CD4-positive, alpha-beta memory T cell (primary cell): ENCODE measurements at regions of chr6 and their contacts with region 1.

Region 1: DNA sequence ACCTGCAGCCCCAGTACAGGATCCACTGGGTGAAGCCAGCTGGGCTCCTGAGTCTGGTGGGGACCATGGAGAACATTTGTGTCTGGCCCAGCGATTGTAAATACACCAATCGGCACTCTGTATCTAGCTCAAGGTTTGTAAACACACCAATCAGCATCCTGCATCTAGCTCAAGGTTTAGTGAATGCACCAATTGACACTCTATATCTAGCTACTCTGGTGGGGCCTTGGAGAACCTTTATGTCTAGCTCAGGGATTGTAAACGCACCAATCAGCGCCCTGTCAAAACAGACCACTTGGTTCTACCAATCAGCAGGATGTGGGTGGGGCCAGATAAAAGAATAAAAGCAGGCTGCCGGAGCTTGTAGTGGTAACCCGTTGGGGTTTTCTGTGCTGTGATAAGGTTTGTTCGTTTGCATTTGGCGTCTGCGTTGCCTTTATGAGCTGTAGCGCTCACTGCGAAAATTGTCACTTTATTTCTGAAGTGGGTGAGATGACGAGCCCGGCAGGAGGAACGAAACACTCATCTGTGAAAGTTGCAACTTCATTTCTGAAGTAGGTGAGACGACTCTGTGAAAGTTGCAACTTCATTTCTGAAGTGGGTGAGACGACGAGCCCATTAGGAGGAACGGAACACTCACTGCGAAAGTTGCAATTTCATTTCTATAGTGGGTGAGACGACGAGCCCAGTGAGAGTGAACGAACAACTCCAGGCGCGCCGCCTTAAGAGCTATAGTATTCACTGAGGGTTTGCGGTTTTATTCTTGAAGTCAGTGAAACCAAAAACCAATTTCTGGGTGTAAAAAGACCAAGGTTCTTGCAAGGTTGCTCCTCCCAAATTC is 31.1 kb downstream of the SERPINB6 start:
- DNase-seq: peak; percentile 76 to 93 (median 80)
- H3K4me3 ChIP-seq: peak overlapping the region; percentile 58 to 59
- H3K4me3 Mint-ChIP-seq: peak overlapping the region; percentile 79 to 95 (median 90)
- H3K27ac ChIP-seq: peak overlapping the region; percentile 61
- H3K27ac Mint-ChIP-seq: peak overlapping the region; percentile 89 to 99 (median 96)
- H3K4me1 ChIP-seq: peaks cover 81% of the 10 kb centered on the region
- H3K4me1 Mint-ChIP-seq: peaks cover 49 to 73% (median 60%) of the 10 kb centered on the region in 4 donors
- H3K27me3 ChIP-seq: no peaks in the 10 kb centered on the region
- H3K27me3 Mint-ChIP-seq: no peaks in the 10 kb centered on the region

Region 2: GRCh38 chr6:2952557-2953095 is 12.4 kb after region 1 on chr6:
- CTCF ChIA-PET with region 1: interaction called, 28 read pairs
- POLR2A ChIA-PET with region 1: interaction called, 9 read pairs
- intact Hi-C with region 1: no loop called
- DNase-seq: peak; percentile 14 to 43 (median 32)
- H3K4me3 ChIP-seq: no peak overlapping the region
- H3K4me3 Mint-ChIP-seq: peak overlapping the region in 1 of 8 donors; percentile 80
- H3K27ac ChIP-seq: no peak overlapping the region
- H3K27ac Mint-ChIP-seq: peak overlapping the region in 4 of 7 donors; percentile 19 to 90 (median 46)
- H3K4me1 ChIP-seq: peaks cover 3% of the 10 kb centered on the region
- H3K4me1 Mint-ChIP-seq: peaks cover 0 to 7% (median 0%) of the 10 kb centered on the region in 4 donors
- H3K27me3 ChIP-seq: no peaks in the 10 kb centered on the region
- H3K27me3 Mint-ChIP-seq: no peaks in the 10 kb centered on the region

Region 3: DNA sequence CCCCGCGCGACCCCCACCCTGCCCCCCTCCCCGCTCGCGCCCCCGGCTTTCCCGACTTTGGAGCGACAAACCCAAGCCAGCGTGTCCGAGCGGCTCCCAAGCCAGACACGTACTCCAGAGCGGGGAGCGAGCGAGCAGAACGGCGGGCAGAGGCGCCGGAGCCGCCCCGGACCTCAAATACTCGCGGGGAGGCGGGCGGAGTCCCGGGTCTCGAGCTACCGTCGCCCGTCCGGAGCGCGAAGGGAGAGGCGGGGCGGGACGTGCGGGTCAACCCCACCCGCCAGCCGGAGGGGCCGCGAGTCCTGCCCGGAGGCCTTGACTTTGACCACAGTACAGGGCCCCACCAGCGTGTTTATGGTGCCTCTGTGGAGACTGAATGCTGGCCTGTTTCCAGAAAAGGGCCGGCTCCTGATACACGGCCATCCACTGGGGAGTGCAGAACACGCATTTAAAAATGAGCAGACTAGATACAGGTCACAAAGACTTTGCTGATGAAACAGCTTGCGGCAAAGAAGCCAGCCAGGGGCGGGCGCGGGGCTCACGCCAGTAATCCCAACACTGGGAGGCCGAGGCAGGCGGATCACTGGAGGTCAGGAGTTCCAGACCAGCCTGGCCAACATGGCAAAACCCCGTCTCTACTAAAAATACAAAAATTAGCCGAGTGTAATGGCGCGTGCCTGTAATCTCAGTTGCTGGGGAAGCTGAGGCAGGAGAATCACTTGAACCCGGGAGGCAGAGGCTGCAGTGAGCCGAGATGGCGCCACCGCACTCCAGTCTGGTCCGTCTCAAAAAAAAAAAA is 31.4 kb after region 1 on chr6 and contains the start of gene SERPINB6:
- CTCF ChIA-PET with region 1: no interaction called
- POLR2A ChIA-PET with region 1: interaction called, 12 read pairs
- intact Hi-C with region 1: loop called (anchors 2 kb)
- DNase-seq: peak; percentile 42 to 50 (median 49)
- H3K4me3 ChIP-seq: peak within 1 kb of the TSS in 1 of 2 donors; percentile 60
- H3K4me3 Mint-ChIP-seq: peak within 1 kb of the TSS; percentile 87 to 93 (median 90)
- H3K27ac ChIP-seq: peak within 1 kb of the TSS; percentile 55
- H3K27ac Mint-ChIP-seq: peak within 1 kb of the TSS; percentile 85 to 96 (median 91)
- H3K4me1 ChIP-seq: peaks cover 16% of the 10 kb centered on the region
- H3K4me1 Mint-ChIP-seq: peaks cover 25 to 44% (median 29%) of the 10 kb centered on the region in 4 donors
- H3K27me3 ChIP-seq: no peaks in the 10 kb centered on the region
- H3K27me3 Mint-ChIP-seq: peaks cover 1 to 2% of the 10 kb centered on the region in 2 donors
- total RNA-seq, gene SERPINB6: 41.2 to 41.9 TPM